ENCODE measurements at regions of chr10 and their contacts with region 1.

Region 1: DNA sequence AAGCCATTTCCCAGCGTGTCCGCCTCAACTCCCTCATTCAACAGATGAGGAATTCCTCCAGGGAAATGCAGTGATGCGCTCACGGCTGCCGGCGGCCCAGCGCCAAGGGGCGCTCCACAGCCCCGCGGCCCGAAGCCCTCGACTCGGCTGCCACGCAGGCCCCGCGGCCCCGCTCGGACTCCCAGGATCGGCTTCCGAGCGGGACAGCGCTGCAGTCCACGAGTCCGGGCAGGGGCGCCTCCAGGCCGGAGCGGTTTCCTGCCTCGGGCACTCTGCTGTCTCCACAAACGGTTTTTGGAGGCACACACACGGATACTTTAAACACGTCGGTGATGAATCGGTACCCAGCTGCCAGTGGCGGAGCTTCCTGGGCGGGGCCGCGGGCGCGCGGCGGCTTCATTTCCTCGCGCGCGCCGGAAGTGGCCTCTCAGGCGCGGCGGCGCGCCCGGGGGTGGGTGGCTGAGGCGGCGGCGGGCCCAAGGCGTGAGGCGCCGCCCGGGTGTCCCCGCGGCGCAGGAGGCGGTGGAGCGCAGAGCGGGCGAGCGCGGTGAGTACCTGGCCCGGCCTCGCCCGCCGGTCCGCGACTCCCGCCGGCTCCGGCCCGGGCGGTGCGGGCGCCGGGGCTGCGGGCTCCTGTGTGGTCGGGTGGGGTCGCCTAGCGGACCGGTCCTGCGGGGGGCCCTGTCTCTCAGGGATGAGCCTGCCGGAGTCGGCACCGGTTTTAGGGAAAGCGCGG is at the start of gene CSGALNACT2:
- DNase-seq: peak; percentile 92
- ATAC-seq: peak; percentile 81
- H3K4me3 Mint-ChIP-seq: peak within 1 kb of the TSS; percentile 95
- H3K27ac Mint-ChIP-seq: peak within 1 kb of the TSS; percentile 96
- H3K4me1 Mint-ChIP-seq: peaks cover 58% of the 10 kb centered on the region
- H3K27me3 Mint-ChIP-seq: no peaks in the 10 kb centered on the region
- CTCF ChIP-seq: no peak
- total RNA-seq, gene CSGALNACT2: 15.2 and 17.4 TPM in 2 replicates

Region 2: DNA sequence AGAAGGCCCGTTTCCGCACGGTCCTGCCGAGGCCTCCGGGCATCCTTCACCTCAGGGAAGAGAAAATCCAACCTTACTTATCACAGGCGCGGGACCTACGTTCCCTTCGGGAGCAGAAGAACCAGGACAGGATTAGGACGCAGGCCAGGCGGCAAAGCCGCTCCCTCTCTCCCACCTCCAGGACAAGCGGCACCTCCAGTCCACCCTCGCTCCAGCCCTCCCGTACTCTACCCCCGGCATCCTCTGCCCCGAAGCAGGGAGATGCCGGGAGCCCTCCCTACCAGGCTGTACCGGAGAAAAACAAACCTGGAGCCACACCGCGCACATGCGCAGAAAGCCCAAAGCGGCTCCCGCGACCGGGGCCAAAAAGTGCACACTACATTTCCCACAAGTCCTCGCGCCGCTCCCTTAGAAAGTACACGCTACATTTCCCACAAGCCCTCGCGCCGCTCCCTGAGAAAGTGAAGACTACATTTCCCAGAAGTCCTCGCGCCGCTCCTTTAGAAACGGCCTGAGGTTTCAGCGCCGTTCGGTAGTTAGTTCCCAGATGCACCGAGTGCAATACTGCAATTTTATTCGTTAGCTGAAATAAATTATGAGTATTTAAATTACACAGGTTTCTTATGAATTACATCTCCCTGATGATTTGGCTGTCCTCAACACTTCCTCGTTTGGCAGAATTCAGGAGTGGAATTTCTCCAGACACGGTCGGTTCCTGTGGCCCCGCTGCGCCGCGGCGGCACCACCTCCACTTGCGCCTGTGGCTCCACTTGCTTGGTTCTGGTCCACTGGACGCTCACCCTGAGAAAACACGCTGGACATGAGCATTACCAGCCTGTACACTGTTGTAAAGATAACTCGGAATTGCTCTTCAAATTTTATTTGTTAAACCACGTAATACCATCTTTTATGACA is 585.4 kb before region 1 on chr10:
- CTCF ChIA-PET with region 1: no interaction called
- POLR2A ChIA-PET with region 1: no interaction called
- intact Hi-C with region 1: loop called (anchors 2 kb)
- DNase-seq: peak; percentile 85
- ATAC-seq: peak; percentile 97
- H3K4me3 Mint-ChIP-seq: peak overlapping the region; percentile 96
- H3K27ac Mint-ChIP-seq: peak overlapping the region; percentile 89
- H3K4me1 Mint-ChIP-seq: peaks cover 35% of the 10 kb centered on the region
- H3K27me3 Mint-ChIP-seq: no peaks in the 10 kb centered on the region
- CTCF ChIP-seq: no peak

Region 3: GRCh38 chr10:43105102-43105785 is 32.9 kb before region 1 on chr10:
- CTCF ChIA-PET with region 1: no interaction called
- POLR2A ChIA-PET with region 1: interaction called, 6 read pairs
- intact Hi-C with region 1: loop called (anchors 1 kb)
- DNase-seq: peak; percentile 82
- ATAC-seq: peak; percentile 95
- H3K4me3 Mint-ChIP-seq: peak overlapping the region; percentile 83
- H3K27ac Mint-ChIP-seq: no peak overlapping the region
- H3K4me1 Mint-ChIP-seq: peaks cover 16% of the 10 kb centered on the region
- H3K27me3 Mint-ChIP-seq: peaks cover 22% of the 10 kb centered on the region
- CTCF ChIP-seq: peak; percentile 97

Region 4: GRCh38 chr10:43204943-43205671 is 66.9 kb after region 1 on chr10:
- CTCF ChIA-PET with region 1: interaction called, 6 read pairs
- POLR2A ChIA-PET with region 1: interaction called, 19 read pairs
- intact Hi-C with region 1: loop called (anchors 1 kb)
- DNase-seq: peak; percentile 35
- ATAC-seq: peak; percentile 45
- H3K4me3 Mint-ChIP-seq: no peak overlapping the region
- H3K27ac Mint-ChIP-seq: no peak overlapping the region
- H3K4me1 Mint-ChIP-seq: peaks cover 7% of the 10 kb centered on the region
- H3K27me3 Mint-ChIP-seq: no peaks in the 10 kb centered on the region
- CTCF ChIP-seq: no peak

Region 5: GRCh38 chr10:43407576-43408330 is 269.6 kb after region 1 on chr10:
- CTCF ChIA-PET with region 1: no interaction called
- POLR2A ChIA-PET with region 1: interaction called, 3 read pairs
- intact Hi-C with region 1: loop called (anchors 1 kb)
- DNase-seq: peak; percentile 75
- ATAC-seq: peak; percentile 35
- H3K4me3 Mint-ChIP-seq: peak overlapping the region; percentile 95
- H3K27ac Mint-ChIP-seq: peak overlapping the region; percentile 98
- H3K4me1 Mint-ChIP-seq: peaks cover 46% of the 10 kb centered on the region
- H3K27me3 Mint-ChIP-seq: no peaks in the 10 kb centered on the region
- CTCF ChIP-seq: no peak

Region 6: DNA sequence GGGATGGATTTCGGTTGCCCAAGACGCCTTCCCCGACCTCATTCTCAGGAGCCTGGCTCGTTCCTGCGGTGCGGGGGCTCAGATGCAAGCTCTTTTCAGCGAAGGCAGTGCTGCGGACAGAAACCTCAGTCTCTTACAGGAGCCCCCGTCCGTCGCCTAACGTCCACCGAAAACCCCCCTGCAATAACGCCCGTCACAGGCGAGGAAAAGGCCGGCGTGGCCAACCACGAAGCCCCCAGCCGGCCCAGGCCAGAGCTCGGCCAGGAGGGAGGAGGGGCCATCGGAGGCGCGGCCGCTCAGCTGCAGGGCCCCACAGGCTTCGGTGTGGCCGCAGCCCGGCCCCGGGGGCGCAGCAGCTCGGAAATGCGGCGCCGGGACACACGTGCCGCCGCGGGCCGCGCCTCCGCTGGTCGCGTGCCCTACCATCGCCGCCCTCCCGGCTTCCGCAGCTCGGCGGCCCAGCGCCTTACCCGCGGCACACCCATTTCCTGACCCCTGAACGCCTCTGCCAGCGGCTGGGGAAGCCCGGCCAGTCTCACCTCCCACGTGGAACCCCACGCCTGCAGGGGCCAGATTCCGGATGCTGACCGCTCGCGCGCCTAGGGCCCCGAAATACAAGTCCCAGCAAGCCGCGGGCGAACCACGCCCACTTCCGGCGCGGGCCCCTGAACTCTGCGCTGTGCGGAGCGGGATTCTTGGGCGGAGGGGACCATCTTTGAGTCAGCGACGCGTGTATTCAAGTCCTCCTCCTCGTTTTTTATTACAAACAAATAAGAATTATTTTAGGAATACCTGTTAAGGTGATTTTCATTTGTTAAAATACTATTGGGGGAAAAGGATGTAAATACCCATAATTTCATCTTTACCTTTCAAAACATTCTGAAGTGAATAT is 436.1 kb after region 1 on chr10 and contains the start of gene ZNF239:
- CTCF ChIA-PET with region 1: no interaction called
- POLR2A ChIA-PET with region 1: no interaction called
- intact Hi-C with region 1: loop called (anchors 1 kb)
- DNase-seq: peak; percentile 74
- ATAC-seq: peak; percentile 95
- H3K4me3 Mint-ChIP-seq: peak within 1 kb of the TSS; percentile 89
- H3K27ac Mint-ChIP-seq: peak within 1 kb of the TSS; percentile 83
- H3K4me1 Mint-ChIP-seq: peaks cover 48% of the 10 kb centered on the region
- H3K27me3 Mint-ChIP-seq: no peaks in the 10 kb centered on the region
- CTCF ChIP-seq: no peak
- total RNA-seq, gene ZNF239: 5.7 and 9.4 TPM in 2 replicates